Breast epithelium (tissue), 4 donors: ENCODE measurements at regions of chr4 and their contacts with region 1.

Region 1: GRCh38 chr4:153409412-153409811 is 56.7 kb upstream of the TMEM131L start:
- DNase-seq: no peak
- H3K4me3 ChIP-seq: no peak overlapping the region
- H3K27ac ChIP-seq: no peak overlapping the region
- H3K4me1 ChIP-seq: no peaks in the 10 kb centered on the region
- H3K27me3 ChIP-seq: no peaks in the 10 kb centered on the region
- CTCF ChIP-seq: no peak
- POLR2A ChIP-seq: no peak

Region 2: DNA sequence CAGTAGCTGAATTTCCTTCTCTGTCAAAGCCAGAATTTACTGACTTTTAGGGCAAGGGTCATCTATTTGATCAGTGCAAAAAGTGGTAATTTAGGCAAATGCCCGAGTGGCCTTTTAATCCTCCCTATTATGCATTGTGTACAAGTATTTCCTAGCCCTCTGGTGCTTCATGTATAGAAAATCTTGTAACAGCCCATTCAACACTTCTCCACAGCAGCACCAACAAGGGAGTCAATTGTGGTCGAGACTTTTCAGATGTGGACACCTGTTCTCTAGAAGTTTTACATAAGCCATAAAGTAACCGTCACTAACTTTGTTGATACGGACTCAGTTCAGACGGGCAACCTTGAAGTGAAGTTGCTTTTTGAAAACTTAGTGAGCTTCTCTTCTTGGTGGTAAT is 524.2 kb before region 1 on chr4:
- intact Hi-C with region 1: loop called (anchors 5 kb)
- DNase-seq: no peak
- H3K4me3 ChIP-seq: no peak overlapping the region
- H3K27ac ChIP-seq: no peak overlapping the region
- H3K4me1 ChIP-seq: no peaks in the 10 kb centered on the region
- H3K27me3 ChIP-seq: no peaks in the 10 kb centered on the region
- CTCF ChIP-seq: no peak
- POLR2A ChIP-seq: no peak

Region 3: DNA sequence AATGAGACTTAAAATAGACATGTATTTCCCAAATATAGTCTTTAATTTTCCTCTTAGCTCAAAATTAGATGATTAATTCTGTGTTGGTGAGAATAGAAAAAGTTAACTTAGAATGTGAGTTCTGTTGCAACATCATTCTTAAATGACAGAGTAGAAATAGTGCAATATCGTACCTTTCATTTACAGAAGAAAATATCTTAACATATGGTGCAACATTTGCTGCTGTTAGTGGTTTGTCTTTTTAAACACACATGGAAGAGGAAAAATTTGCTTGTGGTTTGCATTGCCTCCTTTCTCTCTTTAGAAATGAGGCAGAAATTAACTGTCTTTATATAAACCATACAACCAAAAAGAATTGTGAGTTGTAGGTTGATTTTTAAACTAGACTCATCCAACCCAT is 512.6 kb before region 1 on chr4:
- intact Hi-C with region 1: no loop called
- DNase-seq: no peak
- H3K4me3 ChIP-seq: no peak overlapping the region
- H3K27ac ChIP-seq: no peak overlapping the region
- H3K4me1 ChIP-seq: no peaks in the 10 kb centered on the region
- H3K27me3 ChIP-seq: no peaks in the 10 kb centered on the region
- CTCF ChIP-seq: no peak
- POLR2A ChIP-seq: no peak